HepG2 (cell line): ENCODE measurements at regions of chr20 and their contacts with region 1.

Region 1: DNA sequence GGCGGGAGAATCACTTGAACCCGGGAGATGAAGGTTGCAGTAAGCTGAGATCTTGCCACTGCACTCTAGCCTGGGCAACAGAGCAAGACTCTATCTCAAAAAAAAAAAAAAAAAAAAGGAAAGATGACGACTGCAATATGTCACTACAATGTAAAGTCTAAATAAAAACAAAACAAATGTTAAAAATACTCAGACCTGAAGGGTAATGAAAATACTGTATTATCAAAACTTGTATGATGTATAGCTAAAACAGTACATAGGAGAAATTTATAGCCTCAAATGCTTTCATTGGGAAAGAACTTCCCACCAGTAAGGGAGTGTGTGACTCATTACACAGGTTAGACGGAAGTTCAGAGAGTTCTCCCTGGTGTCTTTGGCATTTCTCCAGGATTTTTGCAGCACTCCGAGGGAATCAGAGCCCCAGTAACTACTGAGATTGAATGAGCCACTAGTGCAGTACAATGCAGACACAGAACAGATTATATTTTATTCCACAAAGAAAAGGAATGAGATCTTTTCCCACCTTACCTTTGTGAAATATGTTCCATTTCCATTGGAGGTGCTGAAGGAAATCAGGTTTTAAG is 12.5 kb upstream of the RALGAPB start:
- DNase-seq: peak; percentile 92
- ATAC-seq: peak; percentile 97
- H3K4me3 ChIP-seq: 0 out of 6 replicates have a peak overlapping the region, but pooled peaks of 1 of the 3 experiments have one; percentile 3
- H3K27ac ChIP-seq: peak overlapping the region; percentile 7
- H3K4me1 ChIP-seq: peaks cover 11% of the 10 kb centered on the region
- H3K27me3 ChIP-seq: no peaks in the 10 kb centered on the region
- CTCF ChIP-seq: no peak
- EP300 ChIP-seq: no peak
- POLR2A ChIP-seq: no peak
- RAD21 ChIP-seq: no peak

Region 2: DNA sequence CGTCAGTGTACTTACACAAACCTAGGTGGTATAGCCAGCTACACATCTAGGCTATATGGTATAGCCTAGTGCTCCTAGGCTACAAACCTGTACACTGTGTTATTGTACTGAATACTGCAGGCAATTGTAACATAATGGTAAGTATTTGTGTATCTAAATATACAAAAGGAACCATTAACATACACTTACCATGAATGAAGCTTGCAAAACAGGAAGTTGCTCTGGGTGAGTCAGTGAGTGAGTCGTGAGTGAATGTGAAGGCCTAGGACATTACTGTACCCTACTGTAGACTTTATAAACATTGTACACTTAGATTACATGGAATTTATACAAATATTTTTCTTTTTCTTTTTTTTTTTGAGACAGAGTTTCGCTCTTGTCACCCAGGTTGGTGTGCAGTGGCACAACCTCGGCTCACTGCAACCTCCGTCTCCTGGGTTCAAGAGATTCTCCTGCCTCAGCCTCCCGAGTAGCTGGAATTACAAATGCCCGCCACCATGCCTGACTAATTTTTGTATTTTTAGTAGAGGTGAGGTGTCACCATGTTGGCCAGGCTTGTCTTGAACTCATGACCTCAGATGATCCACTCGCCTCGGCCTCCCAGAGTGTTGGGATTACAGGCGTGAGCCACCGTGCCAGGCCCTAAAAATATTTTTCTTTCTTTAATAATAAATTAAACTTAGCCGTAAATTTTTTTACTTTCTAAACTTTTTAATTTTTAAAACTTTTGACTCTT is 184.1 kb before region 1 on chr20:
- CTCF ChIA-PET with region 1: no interaction called
- POLR2A ChIA-PET with region 1: no interaction called
- in situ Hi-C with region 1: no loop called
- intact Hi-C with region 1: loop called (anchors 5 kb)
- DNase-seq: peak; percentile 43
- ATAC-seq: no peak; the same call in 2 of the 3 replicates
- H3K4me3 ChIP-seq: no peak overlapping the region
- H3K27ac ChIP-seq: no peak overlapping the region
- H3K4me1 ChIP-seq: no peaks in the 10 kb centered on the region
- H3K27me3 ChIP-seq: peaks cover 0 to 14% of the 10 kb centered on the region in 2 experiments; a peak in 1 of 5 replicates
- CTCF ChIP-seq: no peak
- EP300 ChIP-seq: no peak
- POLR2A ChIP-seq: no peak
- RAD21 ChIP-seq: no peak

Region 3: GRCh38 chr20:38536310-38536709 is 76.2 kb after region 1 on chr20:
- CTCF ChIA-PET with region 1: no interaction called
- POLR2A ChIA-PET with region 1: no interaction called
- in situ Hi-C with region 1: no loop called
- intact Hi-C with region 1: no loop called
- DNase-seq: no peak
- ATAC-seq: no peak
- H3K4me3 ChIP-seq: no peak overlapping the region
- H3K27ac ChIP-seq: no peak overlapping the region
- H3K4me1 ChIP-seq: no peaks in the 10 kb centered on the region
- H3K27me3 ChIP-seq: no peaks in the 10 kb centered on the region
- CTCF ChIP-seq: no peak
- EP300 ChIP-seq: no peak
- POLR2A ChIP-seq: no peak
- RAD21 ChIP-seq: no peak